MCF 10A (cell line): ENCODE measurements at regions of chr2 and their contacts with region 1.

Region 1: DNA sequence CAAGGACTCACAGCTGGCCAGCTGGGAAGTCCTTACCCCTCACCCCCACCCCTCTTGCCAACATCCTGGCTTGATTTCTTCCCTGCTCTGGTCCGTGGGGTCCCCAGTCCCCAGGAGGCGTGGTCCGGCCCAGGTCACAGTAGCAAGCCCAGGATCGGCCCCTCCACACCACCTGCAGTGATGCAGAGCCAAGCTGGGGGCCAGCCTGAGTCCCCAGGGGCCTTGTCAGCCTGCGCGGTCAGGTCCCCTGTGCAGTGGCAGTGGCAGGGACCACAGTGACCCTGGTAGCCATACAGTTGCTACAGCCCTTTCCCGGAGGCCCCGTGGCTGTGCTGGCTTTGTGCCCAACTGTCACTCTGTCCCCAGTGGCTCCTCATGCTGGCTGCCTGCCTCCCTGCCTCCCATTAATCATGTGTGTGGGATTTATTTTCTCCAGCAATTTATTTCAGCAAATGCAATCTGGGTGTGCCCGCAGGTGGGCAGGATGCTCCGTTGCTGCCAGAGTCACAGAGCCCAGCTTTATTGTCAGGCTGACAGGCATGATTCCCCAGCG is 8.8 kb upstream of the PRSS56 start:
- DNase-seq: no peak
- H3K4me3 Mint-ChIP-seq: no peak overlapping the region
- H3K27ac Mint-ChIP-seq: no peak overlapping the region
- H3K4me1 Mint-ChIP-seq: no peaks in the 10 kb centered on the region
- H3K27me3 Mint-ChIP-seq: no peaks in the 10 kb centered on the region
- CTCF ChIP-seq: no peak

Region 2: DNA sequence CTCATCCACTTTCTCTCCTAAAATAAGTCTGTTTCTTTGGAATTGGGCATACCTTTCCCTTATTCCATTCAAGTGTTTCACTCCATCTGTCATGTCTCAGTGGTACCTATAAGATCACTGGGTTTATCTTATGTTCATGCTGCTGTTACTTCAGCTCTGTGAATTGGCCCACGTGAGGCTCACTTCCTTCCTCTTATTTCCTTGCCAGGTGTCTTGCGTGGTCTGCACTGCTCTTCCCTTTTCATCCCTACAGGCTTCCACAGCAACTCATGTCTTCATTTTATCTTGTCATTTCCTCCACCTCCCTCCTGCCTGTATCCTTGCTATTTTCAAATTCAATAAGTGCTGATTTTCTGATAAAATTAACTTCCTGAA is 291.9 kb before region 1 on chr2:
- CTCF ChIA-PET with region 1: no interaction called
- POLR2A ChIA-PET with region 1: no interaction called
- intact Hi-C with region 1: no loop called
- DNase-seq: no peak
- H3K4me3 Mint-ChIP-seq: no peak overlapping the region
- H3K27ac Mint-ChIP-seq: no peak overlapping the region
- H3K4me1 Mint-ChIP-seq: no peaks in the 10 kb centered on the region
- H3K27me3 Mint-ChIP-seq: no peaks in the 10 kb centered on the region
- CTCF ChIP-seq: no peak

Region 3: GRCh38 chr2:232521959-232522622 is 10.7 kb after region 1 on chr2:
- CTCF ChIA-PET with region 1: interaction called, 10 read pairs
- POLR2A ChIA-PET with region 1: no interaction called
- intact Hi-C with region 1: no loop called
- DNase-seq: peak; percentile 38
- H3K4me3 Mint-ChIP-seq: no peak overlapping the region
- H3K27ac Mint-ChIP-seq: no peak overlapping the region
- H3K4me1 Mint-ChIP-seq: no peaks in the 10 kb centered on the region
- H3K27me3 Mint-ChIP-seq: peaks cover 11% of the 10 kb centered on the region
- CTCF ChIP-seq: peak; percentile 90